Cardiac septum (tissue), 1 donor: ENCODE measurements at regions of chr19 and their contacts with region 1.

Region 1: DNA sequence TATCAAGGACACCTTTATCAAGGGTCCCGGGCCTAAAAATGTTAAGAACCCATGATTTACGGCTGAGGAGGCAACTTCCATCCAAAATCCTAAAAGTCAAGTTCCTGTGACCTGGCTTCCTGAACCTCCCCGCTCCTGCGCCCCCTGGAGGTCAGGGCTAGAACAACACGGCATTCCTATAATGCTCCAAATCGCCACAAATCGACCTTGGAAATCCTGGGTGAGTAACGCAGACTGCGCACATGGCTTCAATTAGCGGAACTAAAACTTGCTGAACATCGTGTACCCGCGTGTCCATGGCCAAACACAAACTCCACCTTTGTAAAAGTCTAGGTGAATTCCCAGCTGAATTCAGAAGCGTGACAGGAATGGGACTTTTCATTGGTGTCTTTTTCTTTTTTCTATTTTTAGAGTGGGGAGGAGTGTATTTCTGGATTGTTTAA is 4.3 kb upstream of the C5AR1 start:
- DNase-seq: no peak

Region 2: DNA sequence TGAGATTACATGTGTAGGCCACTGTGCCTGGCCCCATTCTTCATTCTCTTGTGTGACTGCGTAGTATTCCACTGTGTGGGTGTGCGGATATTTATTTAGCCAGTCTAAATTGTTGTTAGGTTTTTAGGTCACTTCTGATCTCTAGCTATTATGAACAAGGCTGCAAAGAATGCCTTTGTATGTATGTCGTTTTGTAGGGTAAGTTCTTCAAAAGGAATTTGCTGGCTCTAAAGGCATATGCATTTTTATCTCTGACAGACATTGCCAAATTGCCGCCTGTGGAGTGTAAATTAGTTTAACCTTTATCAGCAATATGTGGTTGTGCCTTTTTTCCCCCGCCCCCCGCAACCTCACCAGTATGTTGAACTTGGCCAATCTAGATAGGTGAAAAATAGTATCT is 377.6 kb after region 1 on chr19:
- intact Hi-C with region 1: loop called (anchors 10 kb)
- DNase-seq: no peak